ENCODE measurements at regions of chr13 and their contacts with region 1.

Region 1: DNA sequence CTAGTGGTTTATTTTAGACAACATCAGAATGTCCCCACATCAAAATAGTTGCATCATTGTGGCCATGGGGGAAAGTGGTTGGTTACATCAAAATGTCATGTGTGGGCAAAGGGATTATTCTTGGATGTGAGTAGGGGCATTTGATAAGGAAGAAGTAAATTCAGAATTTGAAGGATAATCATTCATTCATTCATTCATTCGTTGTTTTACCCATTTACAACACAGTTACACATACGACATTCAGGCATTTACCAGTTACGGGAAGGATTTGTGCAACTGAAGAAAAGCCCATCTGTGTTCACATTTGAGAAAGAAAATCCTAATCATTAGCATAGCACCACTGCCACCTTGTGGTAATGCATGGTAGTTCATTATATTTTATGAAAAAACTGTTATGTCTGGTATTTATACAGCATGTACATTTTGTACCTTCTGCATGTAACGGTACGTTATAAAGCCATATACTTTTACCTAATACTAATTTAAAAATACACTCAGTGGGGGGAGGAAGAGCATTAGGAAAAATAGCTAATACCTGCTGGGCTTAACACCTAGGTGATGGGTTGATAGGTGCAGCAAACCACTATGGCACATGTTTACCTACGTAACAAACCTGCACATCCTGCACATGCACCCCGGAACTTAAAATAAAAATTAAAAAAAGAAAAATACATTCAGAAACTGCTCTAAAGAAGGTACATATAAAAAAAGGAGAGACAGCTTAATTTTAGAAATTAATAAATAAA is 62.1 kb downstream of the DGKH start:
- DNase-seq: no peak
- ATAC-seq: peak; percentile 65 to 81
- H3K4me3 ChIP-seq: no peak overlapping the region
- H3K27ac ChIP-seq: no peak overlapping the region
- H3K4me1 ChIP-seq: peaks cover 22% of the 10 kb centered on the region
- H3K27me3 ChIP-seq: no peaks in the 10 kb centered on the region
- CTCF ChIP-seq: peak; percentile 82

Region 2: DNA sequence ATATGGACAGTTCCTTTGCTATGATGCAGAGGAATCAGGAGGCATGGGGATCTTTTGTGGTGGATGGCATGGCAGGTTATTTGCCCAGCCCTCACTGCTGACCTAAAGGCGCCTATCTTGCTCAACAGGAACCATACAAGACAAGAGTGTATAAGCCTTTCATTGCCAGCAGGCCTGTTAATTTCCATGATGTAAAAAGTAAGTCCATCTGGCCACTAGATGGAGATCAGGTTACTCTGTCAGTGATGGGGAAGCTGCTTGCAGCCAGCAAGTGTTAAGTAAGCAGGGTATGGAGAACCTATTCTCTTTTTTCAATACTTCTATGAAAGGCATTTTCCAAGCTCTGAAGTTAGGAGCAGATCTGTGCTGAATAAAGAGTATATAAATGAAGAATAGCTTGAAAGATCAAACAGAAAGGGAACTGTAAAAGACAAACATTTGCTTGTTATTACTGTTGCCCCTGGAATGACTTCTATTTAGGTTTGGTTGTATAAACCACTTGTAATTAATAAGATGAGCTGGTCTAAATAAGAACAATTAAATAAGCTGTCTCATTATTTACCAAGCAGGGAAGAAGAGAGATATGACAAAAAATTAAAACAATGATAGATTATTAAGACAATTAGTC is 442.3 kb before region 1 on chr13:
- intact Hi-C with region 1: loop called (anchors 10 kb)
- DNase-seq: no peak
- ATAC-seq: peak; percentile 95
- H3K4me3 ChIP-seq: no peak overlapping the region
- H3K27ac ChIP-seq: no peak overlapping the region
- H3K4me1 ChIP-seq: no peaks in the 10 kb centered on the region
- H3K27me3 ChIP-seq: no peaks in the 10 kb centered on the region
- CTCF ChIP-seq: peak; percentile 74

Region 3: GRCh38 chr13:42181381-42181953 is 70.9 kb after region 1 on chr13:
- intact Hi-C with region 1: no loop called
- DNase-seq: no peak
- ATAC-seq: no peak
- H3K4me3 ChIP-seq: no peak overlapping the region
- H3K27ac ChIP-seq: no peak overlapping the region
- H3K4me1 ChIP-seq: no peaks in the 10 kb centered on the region
- H3K27me3 ChIP-seq: no peaks in the 10 kb centered on the region
- CTCF ChIP-seq: no peak

Measured in lower lobe of right lung (tissue), 2 donors.